ENCODE measurements at regions of chr20 and their contacts with region 1.

Region 1: DNA sequence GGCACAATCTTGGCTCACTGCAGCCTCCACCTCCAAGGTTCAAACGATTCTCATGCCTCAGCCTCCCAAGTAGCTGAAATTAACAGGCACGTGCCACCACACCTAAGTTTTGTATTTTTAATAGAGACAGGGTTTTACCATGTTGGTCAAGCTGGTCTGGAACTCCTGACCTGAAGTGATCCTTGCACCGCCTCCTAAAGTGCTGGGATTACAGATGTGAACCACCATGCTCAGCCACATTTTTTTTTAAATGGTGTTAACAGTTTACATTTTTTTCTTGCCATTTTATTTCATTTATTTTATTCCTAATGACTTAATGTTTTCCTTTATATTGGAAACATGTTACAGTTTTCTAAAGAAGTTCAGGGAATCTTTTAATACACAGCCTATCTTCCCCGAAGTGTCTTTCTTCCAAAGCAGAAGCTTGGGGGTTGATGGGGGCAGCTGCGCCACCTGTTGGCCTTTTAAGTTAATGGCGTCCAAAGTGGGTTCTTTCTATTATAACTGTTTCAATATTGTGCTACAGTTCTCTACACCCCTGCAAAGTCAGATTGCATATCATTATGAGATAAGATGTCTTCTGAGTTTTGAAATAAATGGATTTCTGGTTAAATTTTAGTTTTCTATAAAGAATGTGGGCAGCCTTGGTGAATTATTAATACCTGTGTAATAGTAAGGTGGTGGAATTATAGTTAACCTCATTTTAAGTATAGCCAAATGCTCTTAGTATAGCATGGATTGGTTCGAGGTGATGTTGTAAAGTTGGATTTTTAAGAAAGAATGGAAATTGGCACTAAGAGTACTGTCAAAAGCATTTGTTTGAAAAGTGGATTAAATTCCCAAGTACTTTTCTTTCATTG is 42.0 kb upstream of the PLCG1 start:
- DNase-seq: peak; percentile 62 to 86
- H3K4me3 ChIP-seq: no peak overlapping the region
- H3K27ac ChIP-seq: peak overlapping the region in 1 of 5 donors; percentile 8
- H3K4me1 ChIP-seq: peaks cover 0 to 18% (median 0%) of the 10 kb centered on the region in 4 donors
- H3K27me3 ChIP-seq: no peaks in the 10 kb centered on the region
- CTCF ChIP-seq: peak in 5 of 7 experiments; percentile 59 to 81 (median 65)
- EP300 ChIP-seq: no peak
- POLR2A ChIP-seq: no peak

Region 2: GRCh38 chr20:40966103-40966502 is 129.2 kb before region 1 on chr20:
- intact Hi-C with region 1: loop called (anchors 5 kb)
- DNase-seq: peak in 1 of 2 donors; percentile 2
- H3K4me3 ChIP-seq: no peak overlapping the region
- H3K27ac ChIP-seq: no peak overlapping the region
- H3K4me1 ChIP-seq: peaks cover 0 to 20% (median 13%) of the 10 kb centered on the region in 4 donors
- H3K27me3 ChIP-seq: no peaks in the 10 kb centered on the region
- CTCF ChIP-seq: no peak
- EP300 ChIP-seq: no peak
- POLR2A ChIP-seq: no peak

Region 3: GRCh38 chr20:40990542-40991120 is 104.7 kb before region 1 on chr20:
- intact Hi-C with region 1: loop called (anchors 5 kb)
- DNase-seq: peak; percentile 81 to 92
- H3K4me3 ChIP-seq: no peak overlapping the region
- H3K27ac ChIP-seq: peak overlapping the region in 2 of 5 donors; percentile 14 to 53
- H3K4me1 ChIP-seq: peaks cover 4 to 9% (median 6%) of the 10 kb centered on the region in 4 donors
- H3K27me3 ChIP-seq: no peaks in the 10 kb centered on the region
- CTCF ChIP-seq: peak in 5 of 7 experiments; percentile 67 to 84 (median 82)
- EP300 ChIP-seq: no peak
- POLR2A ChIP-seq: no peak

Measured in stomach (tissue), 19 donors.